Ascending aorta (tissue), 2 donors: ENCODE measurements at regions of chr5 and their contacts with region 1.

Region 1: DNA sequence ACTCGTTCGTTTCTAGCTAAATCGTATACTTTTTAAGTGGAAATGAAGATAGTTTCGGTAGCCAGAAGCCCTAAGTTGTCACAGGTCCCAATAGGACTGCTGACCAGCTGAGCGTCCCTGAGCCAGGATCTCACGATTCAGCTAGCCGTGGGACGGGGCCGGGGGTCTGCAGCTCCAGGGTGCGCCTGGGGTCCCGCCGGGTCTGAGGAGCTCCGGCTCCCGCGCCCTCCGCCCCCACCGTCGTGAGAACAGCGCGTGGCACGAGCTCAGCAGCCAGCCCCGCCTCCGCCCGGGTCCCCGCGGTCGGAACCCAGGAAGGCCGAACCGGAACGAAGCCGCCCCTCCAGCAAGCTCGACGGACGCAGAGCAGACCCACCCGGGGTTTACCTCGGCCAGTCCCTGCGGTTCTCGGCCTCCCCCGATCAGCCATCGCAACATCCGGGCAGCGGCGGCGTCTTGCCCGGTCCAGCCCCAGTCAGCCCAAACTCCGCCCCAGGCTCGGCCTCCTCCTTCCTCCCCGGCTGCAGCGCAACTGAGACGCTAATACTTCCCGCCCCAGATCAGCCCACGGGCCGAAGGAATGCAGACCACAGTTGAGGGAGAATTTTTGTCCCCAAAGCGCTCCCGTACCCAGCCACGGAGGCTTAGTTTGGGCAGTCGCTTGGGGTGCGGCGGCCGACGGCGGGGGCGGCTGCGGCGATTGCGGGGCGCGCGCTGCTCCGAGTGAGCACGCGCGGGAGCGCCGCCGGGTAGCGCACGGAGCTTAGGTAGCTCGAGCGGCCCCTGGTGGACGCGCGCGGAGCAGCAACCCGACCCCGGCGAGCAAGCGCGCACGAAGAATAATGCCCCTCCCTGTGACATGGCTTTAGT is at the start of gene WDR41:
- DNase-seq: peak; percentile 65 to 96
- H3K4me3 ChIP-seq: peak within 1 kb of the TSS; percentile 80 to 87
- H3K27ac ChIP-seq: peak within 1 kb of the TSS; percentile 95 to 97
- H3K4me1 ChIP-seq: peaks cover 0 to 13% of the 10 kb centered on the region in 2 donors
- H3K27me3 ChIP-seq: no peaks in the 10 kb centered on the region
- CTCF ChIP-seq: peak; percentile 75 to 94 (median 85)
- total RNA-seq, gene WDR41: 45.4 TPM

Region 2: DNA sequence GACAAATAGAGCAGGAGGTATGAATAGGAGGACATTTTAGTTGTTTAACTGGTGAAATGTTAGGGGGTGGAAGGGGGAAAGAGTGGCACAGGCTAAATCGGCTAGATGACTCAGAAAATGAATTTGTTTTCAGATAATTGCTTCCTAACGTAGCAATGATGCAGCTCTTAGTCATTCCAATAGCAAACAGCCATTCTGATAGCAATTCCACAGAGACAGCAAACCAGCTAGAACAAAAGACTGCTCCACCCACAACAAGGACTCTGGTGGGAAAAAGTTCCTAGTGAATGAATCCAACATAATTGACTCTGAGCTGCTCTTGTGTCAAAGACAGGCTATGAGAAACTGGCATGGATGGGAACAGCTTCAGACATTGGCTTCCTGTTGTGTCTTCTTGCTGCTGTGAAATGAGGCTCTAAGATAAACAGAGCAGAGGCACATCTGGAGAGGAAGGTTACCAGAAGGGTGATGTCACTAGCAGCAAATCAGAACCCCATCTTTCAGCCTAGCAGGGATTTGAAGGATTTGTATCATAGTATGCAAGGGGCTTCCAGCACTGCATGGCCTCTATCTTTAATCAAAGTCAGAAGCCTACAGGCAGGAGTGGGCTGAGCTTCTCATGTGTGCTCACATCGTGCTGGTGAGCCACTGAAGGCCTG is 701.3 kb before region 1 on chr5:
- intact Hi-C with region 1: loop called (anchors 10 kb)
- DNase-seq: peak in 1 of 2 donors; percentile 72
- H3K4me3 ChIP-seq: no peak overlapping the region
- H3K27ac ChIP-seq: peak overlapping the region; percentile 73 to 76
- H3K4me1 ChIP-seq: peaks cover 3 to 20% of the 10 kb centered on the region in 2 donors
- H3K27me3 ChIP-seq: no peaks in the 10 kb centered on the region
- CTCF ChIP-seq: no peak

Region 3: GRCh38 chr5:77086689-77087483 is 405.1 kb before region 1 on chr5 and contains the start of gene ZBED3:
- intact Hi-C with region 1: loop called (anchors 1 kb)
- DNase-seq: peak; percentile 27 to 84
- H3K4me3 ChIP-seq: peak within 1 kb of the TSS; percentile 65 to 86
- H3K27ac ChIP-seq: peak within 1 kb of the TSS; percentile 90 to 93
- H3K4me1 ChIP-seq: peaks cover 0 to 8% of the 10 kb centered on the region in 2 donors
- H3K27me3 ChIP-seq: no peaks in the 10 kb centered on the region
- CTCF ChIP-seq: peak in 1 of 3 experiments; percentile 14
- total RNA-seq, gene ZBED3: 0.64 TPM

Region 4: GRCh38 chr5:77210091-77210963 is 281.7 kb before region 1 on chr5 and contains the start of gene PDE8B:
- intact Hi-C with region 1: loop called (anchors 10 kb)
- DNase-seq: no peak
- H3K4me3 ChIP-seq: peak within 1 kb of the TSS; percentile 70 to 90
- H3K27ac ChIP-seq: peak within 1 kb of the TSS; percentile 33 to 40
- H3K4me1 ChIP-seq: peaks cover 0 to 2% of the 10 kb centered on the region in 2 donors
- H3K27me3 ChIP-seq: no peaks in the 10 kb centered on the region
- CTCF ChIP-seq: no peak
- total RNA-seq, gene PDE8B: 28.1 TPM

Region 5: GRCh38 chr5:77775790-77776553 is 284.0 kb after region 1 on chr5 and contains the start of gene TBCA:
- intact Hi-C with region 1: loop called (anchors 5 kb)
- DNase-seq: peak; percentile 43 to 92
- H3K4me3 ChIP-seq: peak within 1 kb of the TSS; percentile 81 to 88
- H3K27ac ChIP-seq: peak within 1 kb of the TSS; percentile 96 to 98
- H3K4me1 ChIP-seq: peaks cover 4 to 30% of the 10 kb centered on the region in 2 donors
- H3K27me3 ChIP-seq: no peaks in the 10 kb centered on the region
- CTCF ChIP-seq: peak; percentile 30 to 37 (median 33)
- total RNA-seq, gene TBCA: 27.4 TPM